ENCODE measurements at regions of chr20 and their contacts with region 1.

Region 1: GRCh38 chr20:44460795-44461141 is 14.9 kb upstream of the TTPAL start:
- DNase-seq: peak in 1 of 4 donors; percentile 22
- ATAC-seq: peak; percentile 57
- H3K4me3 ChIP-seq: no peak overlapping the region
- H3K27ac ChIP-seq: peak overlapping the region in 2 of 4 donors; percentile 23 to 31
- H3K4me1 ChIP-seq: peaks cover 19% of the 10 kb centered on the region
- H3K27me3 ChIP-seq: no peaks in the 10 kb centered on the region
- CTCF ChIP-seq: peak in 6 of 7 experiments; percentile 18 to 61 (median 51)
- POLR2A ChIP-seq: no peak

Region 2: DNA sequence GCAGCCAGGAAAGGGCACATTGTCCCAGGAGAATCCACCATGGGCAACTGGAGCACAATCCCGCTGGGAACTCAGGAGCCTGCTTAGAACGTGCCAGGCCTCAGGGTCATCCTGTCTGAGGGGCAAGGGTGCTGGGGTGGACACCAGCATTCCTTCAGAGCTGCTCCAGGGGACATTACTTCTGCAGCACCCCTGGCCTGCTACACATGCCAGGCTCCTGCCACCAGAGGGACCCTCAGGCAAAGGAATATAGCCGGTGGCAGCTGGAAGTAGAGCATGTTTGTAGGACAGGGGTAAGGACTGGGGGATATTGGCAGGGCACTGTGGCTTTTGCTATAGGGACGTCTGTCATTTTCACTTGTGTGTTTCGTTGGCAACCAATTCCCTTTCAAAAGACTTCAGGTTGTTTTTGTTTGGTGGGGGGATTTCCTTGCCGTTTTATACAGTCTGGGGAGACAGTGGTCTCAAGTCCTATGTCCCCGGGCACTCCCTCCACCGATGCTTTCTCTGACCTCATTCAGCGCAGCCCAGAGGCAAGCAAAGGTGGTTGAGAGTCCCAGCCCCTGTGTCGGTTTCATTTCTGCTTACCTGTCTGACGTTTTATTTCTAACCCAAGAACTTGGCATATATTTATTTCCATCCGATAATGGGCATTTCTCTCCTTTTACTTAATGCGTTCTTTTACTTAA is 404.6 kb before region 1 on chr20:
- intact Hi-C with region 1: no loop called
- DNase-seq: no peak
- ATAC-seq: no peak
- H3K4me3 ChIP-seq: no peak overlapping the region
- H3K27ac ChIP-seq: no peak overlapping the region
- H3K4me1 ChIP-seq: no peaks in the 10 kb centered on the region
- H3K27me3 ChIP-seq: no peaks in the 10 kb centered on the region
- CTCF ChIP-seq: peak in 4 of 7 experiments; percentile 3 to 27 (median 14)
- POLR2A ChIP-seq: no peak

Region 3: GRCh38 chr20:44210422-44211176 is 250.2 kb before region 1 on chr20 and contains the start of gene OSER1:
- intact Hi-C with region 1: loop called (anchors 10 kb)
- DNase-seq: peak; percentile 98 to 99 (median 98)
- ATAC-seq: peak; percentile 96
- H3K4me3 ChIP-seq: peak within 1 kb of the TSS; percentile 52 to 71
- H3K27ac ChIP-seq: peak within 1 kb of the TSS; percentile 81 to 96 (median 92)
- H3K4me1 ChIP-seq: peaks cover 35% of the 10 kb centered on the region
- H3K27me3 ChIP-seq: no peaks in the 10 kb centered on the region
- CTCF ChIP-seq: peak in 3 of 7 experiments; percentile 12 to 37 (median 22)
- POLR2A ChIP-seq: peak; percentile 92 to 99 (median 98)
- total RNA-seq, gene OSER1: 2.0 to 17.1 TPM

Measured in body of pancreas (tissue), 4 donors.